ENCODE measurements at regions of chr22 and their contacts with region 1.

Region 1: GRCh38 chr22:45863981-45864751 is 112.8 kb downstream of the WNT7B start:
- DNase-seq: peak; percentile 87
- H3K4me3 Mint-ChIP-seq: peak overlapping the region; percentile 20
- H3K27ac Mint-ChIP-seq: peak overlapping the region; percentile 76
- H3K4me1 Mint-ChIP-seq: peaks cover 34% of the 10 kb centered on the region
- H3K27me3 Mint-ChIP-seq: peaks cover 18% of the 10 kb centered on the region
- CTCF ChIP-seq: peak; percentile 99

Region 2: GRCh38 chr22:45553351-45554039 is 310.7 kb before region 1 on chr22:
- CTCF ChIA-PET with region 1: interaction called, 10 read pairs
- intact Hi-C with region 1: no loop called
- DNase-seq: peak; percentile 90
- H3K4me3 Mint-ChIP-seq: peak overlapping the region; percentile 65
- H3K27ac Mint-ChIP-seq: peak overlapping the region; percentile 41
- H3K4me1 Mint-ChIP-seq: peaks cover 27% of the 10 kb centered on the region
- H3K27me3 Mint-ChIP-seq: no peaks in the 10 kb centered on the region
- CTCF ChIP-seq: peak; percentile 87

Region 3: GRCh38 chr22:45577746-45578523 is 286.2 kb before region 1 on chr22:
- CTCF ChIA-PET with region 1: no interaction called
- intact Hi-C with region 1: loop called (anchors 10 kb)
- DNase-seq: peak; percentile 91
- H3K4me3 Mint-ChIP-seq: peak overlapping the region; percentile 21
- H3K27ac Mint-ChIP-seq: peak overlapping the region; percentile 69
- H3K4me1 Mint-ChIP-seq: peaks cover 18% of the 10 kb centered on the region
- H3K27me3 Mint-ChIP-seq: no peaks in the 10 kb centered on the region
- CTCF ChIP-seq: peak; percentile 96

Region 4: GRCh38 chr22:45777046-45777851 is 86.9 kb before region 1 on chr22:
- CTCF ChIA-PET with region 1: no interaction called
- intact Hi-C with region 1: no loop called
- DNase-seq: peak; percentile 63
- H3K4me3 Mint-ChIP-seq: peak overlapping the region; percentile 51
- H3K27ac Mint-ChIP-seq: peak overlapping the region; percentile 75
- H3K4me1 Mint-ChIP-seq: peaks cover 76% of the 10 kb centered on the region
- H3K27me3 Mint-ChIP-seq: no peaks in the 10 kb centered on the region
- CTCF ChIP-seq: no peak

Region 5: GRCh38 chr22:45817745-45818423 is 46.3 kb before region 1 on chr22:
- CTCF ChIA-PET with region 1: no interaction called
- intact Hi-C with region 1: no loop called
- DNase-seq: no peak
- H3K4me3 Mint-ChIP-seq: no peak overlapping the region
- H3K27ac Mint-ChIP-seq: no peak overlapping the region
- H3K4me1 Mint-ChIP-seq: no peaks in the 10 kb centered on the region
- H3K27me3 Mint-ChIP-seq: no peaks in the 10 kb centered on the region
- CTCF ChIP-seq: no peak

Region 6: DNA sequence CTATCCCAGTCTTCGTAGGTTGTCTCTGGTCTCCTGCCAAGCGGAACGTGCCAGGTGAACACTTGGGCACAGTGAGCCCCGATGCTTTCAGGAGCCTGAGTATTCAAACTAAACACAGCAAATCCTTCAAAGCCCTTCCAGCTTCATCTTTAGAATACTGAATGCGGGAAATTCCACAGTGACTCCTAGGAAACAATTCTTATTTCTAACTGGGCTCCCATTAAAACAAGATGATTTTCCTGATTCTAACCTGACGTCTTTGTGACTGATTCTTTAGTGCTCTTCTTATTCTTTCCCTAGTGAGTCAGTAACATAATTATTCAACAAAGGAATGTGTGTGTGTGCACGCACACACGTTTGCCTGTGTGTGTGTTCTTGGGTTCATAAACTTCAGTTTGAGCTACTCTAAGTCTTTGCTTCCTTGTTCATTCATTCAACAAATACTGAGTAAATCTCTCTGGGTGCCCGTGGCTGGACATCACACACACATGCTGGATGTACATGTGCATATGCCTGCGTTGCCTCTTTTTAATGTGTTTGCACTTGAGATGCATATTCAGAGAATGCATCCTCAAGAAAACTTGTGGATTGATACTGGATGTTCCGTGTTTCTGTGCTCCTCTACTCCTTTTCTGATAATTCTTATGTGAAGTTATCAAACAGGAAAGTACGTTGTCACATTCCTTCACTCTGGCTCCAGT is 21.7 kb before region 1 on chr22:
- CTCF ChIA-PET with region 1: no interaction called
- intact Hi-C with region 1: no loop called
- DNase-seq: no peak
- H3K4me3 Mint-ChIP-seq: no peak overlapping the region
- H3K27ac Mint-ChIP-seq: peak overlapping the region; percentile 40
- H3K4me1 Mint-ChIP-seq: peaks cover 9% of the 10 kb centered on the region
- H3K27me3 Mint-ChIP-seq: no peaks in the 10 kb centered on the region
- CTCF ChIP-seq: no peak

Region 7: GRCh38 chr22:45911601-45912271 is 47.6 kb after region 1 on chr22:
- CTCF ChIA-PET with region 1: interaction called, 18 read pairs
- intact Hi-C with region 1: no loop called
- DNase-seq: peak; percentile 81
- H3K4me3 Mint-ChIP-seq: peak overlapping the region; percentile 57
- H3K27ac Mint-ChIP-seq: peak overlapping the region; percentile 77
- H3K4me1 Mint-ChIP-seq: peaks cover 46% of the 10 kb centered on the region
- H3K27me3 Mint-ChIP-seq: no peaks in the 10 kb centered on the region
- CTCF ChIP-seq: no peak

Region 8: DNA sequence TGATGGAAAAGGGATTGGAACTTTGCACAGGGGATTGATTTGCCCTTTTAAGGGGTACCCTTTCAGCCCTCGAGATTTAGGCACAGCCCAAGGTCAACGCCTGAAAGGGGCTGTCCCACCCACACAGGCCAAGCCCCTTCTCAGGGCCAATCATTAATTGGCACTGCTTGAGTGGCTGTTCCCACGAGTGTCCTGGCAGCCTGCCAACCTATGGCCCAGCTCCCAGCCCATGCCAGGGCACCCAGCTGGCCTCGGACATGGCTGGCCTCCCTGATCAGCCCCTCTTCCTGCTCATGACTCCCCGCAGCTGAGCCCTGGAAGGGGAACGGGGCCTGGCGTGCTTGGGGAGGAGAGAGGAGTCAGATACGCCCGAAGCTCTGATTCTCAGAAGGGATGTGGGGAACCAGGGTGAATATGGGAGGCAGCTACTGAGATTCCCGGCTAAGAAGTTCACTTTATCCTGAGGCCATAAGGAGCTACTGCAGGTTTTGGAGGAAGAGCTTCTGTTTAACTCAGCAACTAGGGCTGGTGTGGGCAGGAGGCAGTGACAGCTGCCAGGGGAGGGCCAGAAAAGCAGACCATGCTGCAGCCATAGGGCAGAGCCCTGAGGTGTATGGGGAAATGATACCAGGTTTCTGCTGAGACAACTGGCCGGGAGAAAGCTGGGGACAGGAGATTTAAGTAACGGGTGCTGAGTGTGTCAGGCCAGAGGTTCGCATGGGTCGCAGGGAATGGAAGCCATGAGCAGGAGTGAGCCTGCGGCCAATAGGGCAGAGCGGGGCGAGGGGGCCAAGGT is 82.8 kb after region 1 on chr22:
- CTCF ChIA-PET with region 1: interaction called, 13 read pairs
- intact Hi-C with region 1: no loop called
- DNase-seq: no peak
- H3K4me3 Mint-ChIP-seq: no peak overlapping the region
- H3K27ac Mint-ChIP-seq: peak overlapping the region; percentile 46
- H3K4me1 Mint-ChIP-seq: peaks cover 16% of the 10 kb centered on the region
- H3K27me3 Mint-ChIP-seq: no peaks in the 10 kb centered on the region
- CTCF ChIP-seq: no peak

Region 9: DNA sequence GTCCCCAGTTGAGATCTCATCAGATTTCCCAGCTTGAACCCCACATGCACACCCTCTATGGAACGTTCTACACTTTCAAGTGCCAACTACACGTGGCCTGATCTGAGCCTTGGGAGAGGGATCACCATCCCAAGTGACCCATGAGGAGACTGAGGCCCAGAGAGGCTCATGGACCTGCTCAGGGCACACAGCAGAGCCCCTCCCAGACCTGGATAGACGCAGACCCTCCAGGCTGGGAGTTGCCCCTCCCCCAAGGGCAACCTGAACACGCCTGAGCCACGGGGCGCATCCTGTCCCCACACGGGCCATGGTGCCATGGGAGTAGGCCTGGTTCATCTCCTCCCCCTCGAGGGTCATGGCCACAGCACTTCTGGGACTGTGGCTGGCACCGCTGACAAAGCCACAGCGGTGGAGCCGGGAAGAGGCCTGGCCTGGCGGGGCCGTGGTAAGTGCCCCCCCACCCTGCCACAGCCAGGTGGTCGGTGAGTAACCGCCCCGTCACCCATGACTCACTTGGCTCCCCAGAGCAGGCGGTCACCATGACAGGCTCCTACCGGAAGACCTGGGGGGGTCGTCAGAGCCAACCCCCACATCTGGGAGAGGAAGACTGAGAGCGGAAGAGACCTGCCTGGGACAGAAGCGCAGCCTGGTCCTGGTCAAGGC is 104.7 kb after region 1 on chr22:
- CTCF ChIA-PET with region 1: interaction called, 12 read pairs
- intact Hi-C with region 1: loop called (anchors 2 kb)
- DNase-seq: peak; percentile 77
- H3K4me3 Mint-ChIP-seq: peak overlapping the region; percentile 42
- H3K27ac Mint-ChIP-seq: peak overlapping the region; percentile 64
- H3K4me1 Mint-ChIP-seq: peaks cover 43% of the 10 kb centered on the region
- H3K27me3 Mint-ChIP-seq: no peaks in the 10 kb centered on the region
- CTCF ChIP-seq: no peak

Region 10: DNA sequence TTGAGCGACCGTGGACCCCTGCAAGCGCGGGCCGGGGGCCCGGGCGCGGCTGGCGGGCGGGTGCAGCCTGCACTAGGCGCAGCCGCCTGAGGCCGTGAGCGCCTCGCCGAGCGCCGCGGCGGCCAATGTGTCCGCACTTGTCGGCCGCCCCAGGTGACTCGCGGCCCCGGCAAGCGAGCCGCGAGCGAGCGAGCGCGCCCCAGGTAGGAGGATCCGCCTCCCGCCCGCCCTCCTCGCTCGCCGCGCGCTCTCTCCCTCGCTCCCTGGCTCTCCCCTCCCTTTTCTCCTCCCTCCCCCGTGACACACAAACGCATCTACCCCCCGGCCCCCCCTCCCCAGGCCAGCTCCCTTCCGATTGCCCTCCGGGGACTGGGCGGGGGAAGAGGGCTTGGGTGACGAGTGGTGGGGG is 112.8 kb after region 1 on chr22 and contains the start of gene WNT7B:
- CTCF ChIA-PET with region 1: interaction called, 9 read pairs
- intact Hi-C with region 1: loop called (anchors 2 kb)
- DNase-seq: peak; percentile 84
- H3K4me3 Mint-ChIP-seq: no peak within 1 kb of the TSS
- H3K27ac Mint-ChIP-seq: no peak within 1 kb of the TSS
- H3K4me1 Mint-ChIP-seq: peaks cover 22% of the 10 kb centered on the region
- H3K27me3 Mint-ChIP-seq: no peaks in the 10 kb centered on the region
- CTCF ChIP-seq: no peak
- total RNA-seq, gene WNT7B: 97.0 and 100.0 TPM in 2 replicates